Breast epithelium (tissue), 4 donors: ENCODE measurements at regions of chr7 and their contacts with region 1.

Region 1: GRCh38 chr7:98168181-98168905 is 42.9 kb upstream of the BHLHA15 start:
- DNase-seq: peak in 1 of 2 donors; percentile 56
- H3K4me3 ChIP-seq: no peak overlapping the region
- H3K27ac ChIP-seq: no peak overlapping the region
- H3K4me1 ChIP-seq: no peaks in the 10 kb centered on the region
- H3K27me3 ChIP-seq: no peaks in the 10 kb centered on the region
- CTCF ChIP-seq: peak; percentile 33 to 88 (median 85)
- POLR2A ChIP-seq: no peak

Region 2: DNA sequence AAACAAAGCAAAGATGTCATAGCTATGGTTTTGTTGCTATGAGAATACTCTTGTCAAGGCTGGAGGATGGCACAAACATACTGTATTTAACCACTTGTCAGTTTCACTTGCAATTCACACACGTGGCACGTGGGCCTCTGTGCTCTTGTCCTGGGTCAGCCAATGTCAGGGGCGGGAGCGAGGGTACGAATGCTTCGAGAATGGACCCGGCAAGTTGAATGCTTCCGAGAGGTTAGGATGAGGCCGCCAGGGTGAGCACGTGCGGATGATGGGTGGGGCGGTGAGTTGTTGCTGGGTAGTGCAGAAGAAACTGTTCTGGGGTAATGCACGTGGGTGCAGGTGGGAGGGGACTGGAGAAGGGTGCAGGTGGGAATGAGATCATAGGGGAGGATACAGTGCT is 168.0 kb before region 1 on chr7:
- intact Hi-C with region 1: no loop called
- DNase-seq: no peak
- H3K4me3 ChIP-seq: no peak overlapping the region
- H3K27ac ChIP-seq: no peak overlapping the region
- H3K4me1 ChIP-seq: no peaks in the 10 kb centered on the region
- H3K27me3 ChIP-seq: no peaks in the 10 kb centered on the region
- CTCF ChIP-seq: no peak
- POLR2A ChIP-seq: no peak

Region 3: GRCh38 chr7:98021588-98022351 is 146.6 kb before region 1 on chr7:
- intact Hi-C with region 1: loop called (anchors 10 kb)
- DNase-seq: peak; percentile 71 to 83
- H3K4me3 ChIP-seq: no peak overlapping the region
- H3K27ac ChIP-seq: no peak overlapping the region
- H3K4me1 ChIP-seq: no peaks in the 10 kb centered on the region
- H3K27me3 ChIP-seq: no peaks in the 10 kb centered on the region
- CTCF ChIP-seq: peak; percentile 69 to 88 (median 72)
- POLR2A ChIP-seq: no peak

Region 4: DNA sequence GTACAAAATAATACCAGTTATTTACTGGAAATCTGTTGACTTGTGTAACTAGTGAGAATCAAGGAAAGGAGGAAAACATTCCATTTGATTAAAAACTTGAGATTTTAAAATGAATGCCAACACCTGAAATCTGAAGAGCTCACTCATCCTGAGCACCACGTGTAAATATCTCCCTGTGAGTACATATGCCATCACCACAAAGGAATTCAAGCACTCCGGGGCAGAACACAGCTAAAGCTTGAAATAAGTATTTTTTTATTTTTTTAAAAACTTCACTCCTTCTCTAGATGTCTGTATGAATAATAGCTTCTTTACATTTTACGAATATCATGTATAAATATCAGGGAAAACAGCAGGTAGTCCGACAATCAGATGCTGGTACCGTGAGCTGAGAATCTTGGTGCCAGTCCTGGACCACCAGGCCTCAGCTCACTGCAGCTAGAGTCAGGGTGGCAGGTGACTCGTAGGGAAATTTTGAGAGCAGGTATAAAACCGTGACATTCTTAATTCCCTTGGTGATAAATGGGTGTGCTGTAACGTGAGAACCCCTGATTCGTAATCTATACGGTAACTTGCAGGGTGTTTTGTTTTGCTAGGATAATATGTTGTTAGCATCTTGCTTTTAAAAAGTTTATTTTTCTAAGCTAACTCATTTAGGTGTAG is 49.0 kb before region 1 on chr7:
- intact Hi-C with region 1: no loop called
- DNase-seq: no peak
- H3K4me3 ChIP-seq: no peak overlapping the region
- H3K27ac ChIP-seq: no peak overlapping the region
- H3K4me1 ChIP-seq: no peaks in the 10 kb centered on the region
- H3K27me3 ChIP-seq: no peaks in the 10 kb centered on the region
- CTCF ChIP-seq: no peak
- POLR2A ChIP-seq: no peak

Region 5: GRCh38 chr7:98133181-98133580 is 35.2 kb before region 1 on chr7:
- intact Hi-C with region 1: no loop called
- DNase-seq: no peak
- H3K4me3 ChIP-seq: no peak overlapping the region
- H3K27ac ChIP-seq: no peak overlapping the region
- H3K4me1 ChIP-seq: peaks cover 0 to 4% of the 10 kb centered on the region in 2 donors
- H3K27me3 ChIP-seq: no peaks in the 10 kb centered on the region
- CTCF ChIP-seq: no peak
- POLR2A ChIP-seq: no peak